ENCODE measurements at regions of chr14 and their contacts with region 1.

Region 1: DNA sequence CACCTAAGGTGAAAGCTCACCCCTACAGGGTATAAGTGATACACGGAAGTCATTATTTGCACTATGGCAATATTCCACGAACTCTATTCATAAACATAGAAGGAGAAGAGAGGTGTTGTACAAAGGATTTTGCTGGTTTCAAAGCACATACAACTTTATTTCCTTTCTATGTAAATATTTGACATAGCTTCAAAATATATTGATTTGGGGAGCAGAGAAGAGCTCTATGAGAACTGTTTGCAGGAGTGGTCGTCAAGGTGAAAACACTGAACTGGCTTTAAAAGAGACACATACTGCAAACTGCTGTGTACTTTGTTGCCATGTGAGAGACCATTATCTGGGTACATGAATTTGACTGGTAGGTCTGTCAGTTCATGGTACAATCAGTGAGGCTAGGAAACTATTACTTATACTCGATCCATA is 16.7 kb downstream of the CNIH1 start:
- DNase-seq: no peak
- ATAC-seq: no peak
- H3K4me3 Mint-ChIP-seq: no peak overlapping the region
- H3K27ac Mint-ChIP-seq: peak overlapping the region; percentile 19
- H3K4me1 Mint-ChIP-seq: peaks cover 33% of the 10 kb centered on the region
- H3K27me3 Mint-ChIP-seq: no peaks in the 10 kb centered on the region

Region 2: GRCh38 chr14:54411371-54411770 is 13.1 kb before region 1 on chr14:
- CTCF ChIA-PET with region 1: interaction called, 11 read pairs
- POLR2A ChIA-PET with region 1: no interaction called
- intact Hi-C with region 1: no loop called
- DNase-seq: no peak
- ATAC-seq: no peak
- H3K4me3 Mint-ChIP-seq: no peak overlapping the region
- H3K27ac Mint-ChIP-seq: no peak overlapping the region
- H3K4me1 Mint-ChIP-seq: no peaks in the 10 kb centered on the region
- H3K27me3 Mint-ChIP-seq: no peaks in the 10 kb centered on the region

Region 3: DNA sequence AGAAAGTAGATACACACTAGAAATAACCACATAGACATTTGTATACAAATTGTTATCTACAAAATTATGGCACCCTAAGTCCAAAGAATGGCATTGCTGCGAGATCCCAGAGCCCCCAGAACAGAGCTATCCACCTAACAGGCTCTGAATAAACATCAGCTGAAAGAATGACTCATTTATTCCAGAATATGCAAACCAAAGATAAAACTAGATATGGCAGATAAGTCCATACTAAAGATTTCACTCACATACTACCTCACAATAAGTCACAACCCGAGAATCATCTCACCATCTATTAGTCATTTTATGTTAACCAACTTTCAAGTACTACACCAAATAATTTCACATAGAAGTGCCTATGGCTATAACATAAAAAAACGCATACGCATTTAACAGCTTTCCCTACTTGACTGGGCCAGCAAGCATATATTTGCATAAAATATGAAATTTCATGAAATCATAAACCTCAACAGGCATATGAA is 11.1 kb after region 1 on chr14:
- CTCF ChIA-PET with region 1: interaction called, 12 read pairs
- POLR2A ChIA-PET with region 1: interaction called, 5 read pairs
- intact Hi-C with region 1: no loop called
- DNase-seq: peak; percentile 32
- ATAC-seq: peak; percentile 96
- H3K4me3 Mint-ChIP-seq: peak overlapping the region; percentile 47
- H3K27ac Mint-ChIP-seq: peak overlapping the region; percentile 87
- H3K4me1 Mint-ChIP-seq: peaks cover 80% of the 10 kb centered on the region
- H3K27me3 Mint-ChIP-seq: no peaks in the 10 kb centered on the region

Region 4: DNA sequence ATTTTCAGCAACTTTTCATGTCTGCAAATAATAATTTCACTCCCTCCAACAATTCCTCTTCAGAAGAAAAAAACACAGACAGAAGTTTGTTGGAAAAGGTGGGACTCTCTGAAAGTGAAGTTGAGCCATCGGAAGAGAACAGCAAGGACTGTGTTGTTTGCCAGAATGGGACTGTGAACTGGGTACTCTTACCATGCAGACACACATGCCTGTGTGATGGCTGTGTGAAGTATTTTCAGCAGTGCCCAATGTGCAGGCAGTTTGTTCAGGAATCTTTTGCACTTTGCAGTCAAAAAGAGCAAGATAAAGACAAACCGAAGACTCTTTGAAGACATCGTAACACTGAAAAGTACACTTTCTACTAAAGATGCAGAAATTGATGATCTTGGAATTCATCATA is 113.6 kb after region 1 on chr14:
- CTCF ChIA-PET with region 1: no interaction called
- POLR2A ChIA-PET with region 1: no interaction called
- intact Hi-C with region 1: no loop called
- DNase-seq: no peak
- ATAC-seq: no peak
- H3K4me3 Mint-ChIP-seq: no peak overlapping the region
- H3K27ac Mint-ChIP-seq: no peak overlapping the region
- H3K4me1 Mint-ChIP-seq: no peaks in the 10 kb centered on the region
- H3K27me3 Mint-ChIP-seq: no peaks in the 10 kb centered on the region

Measured in activated CD4-positive, alpha-beta T cell treated with anti-CD3 and anti-CD28 coated beads for 36 hours (primary cell).